Naive thymus-derived CD4-positive, alpha-beta T cell (primary cell): ENCODE measurements at regions of chr16 and their contacts with region 1.

Region 1: GRCh38 chr16:2155091-2156021 is at the start of gene TRAF7:
- DNase-seq: peak; percentile 85 to 99 (median 98)
- ATAC-seq: peak; percentile 95
- H3K4me3 ChIP-seq: peak within 1 kb of the TSS; percentile 79
- H3K4me3 Mint-ChIP-seq: peak within 1 kb of the TSS; percentile 85 to 99 (median 94)
- H3K27ac ChIP-seq: peak within 1 kb of the TSS; percentile 80
- H3K27ac Mint-ChIP-seq: peak within 1 kb of the TSS; percentile 78 to 95 (median 91)
- H3K4me1 ChIP-seq: peaks cover 21 to 52% of the 10 kb centered on the region in 2 donors
- H3K4me1 Mint-ChIP-seq: peaks cover 20 to 59% (median 44%) of the 10 kb centered on the region in 7 donors
- H3K27me3 ChIP-seq: no peaks in the 10 kb centered on the region
- H3K27me3 Mint-ChIP-seq: no peaks in the 10 kb centered on the region
- total RNA-seq, gene TRAF7: 30.0 to 58.3 (median 36.7) TPM

Region 2: DNA sequence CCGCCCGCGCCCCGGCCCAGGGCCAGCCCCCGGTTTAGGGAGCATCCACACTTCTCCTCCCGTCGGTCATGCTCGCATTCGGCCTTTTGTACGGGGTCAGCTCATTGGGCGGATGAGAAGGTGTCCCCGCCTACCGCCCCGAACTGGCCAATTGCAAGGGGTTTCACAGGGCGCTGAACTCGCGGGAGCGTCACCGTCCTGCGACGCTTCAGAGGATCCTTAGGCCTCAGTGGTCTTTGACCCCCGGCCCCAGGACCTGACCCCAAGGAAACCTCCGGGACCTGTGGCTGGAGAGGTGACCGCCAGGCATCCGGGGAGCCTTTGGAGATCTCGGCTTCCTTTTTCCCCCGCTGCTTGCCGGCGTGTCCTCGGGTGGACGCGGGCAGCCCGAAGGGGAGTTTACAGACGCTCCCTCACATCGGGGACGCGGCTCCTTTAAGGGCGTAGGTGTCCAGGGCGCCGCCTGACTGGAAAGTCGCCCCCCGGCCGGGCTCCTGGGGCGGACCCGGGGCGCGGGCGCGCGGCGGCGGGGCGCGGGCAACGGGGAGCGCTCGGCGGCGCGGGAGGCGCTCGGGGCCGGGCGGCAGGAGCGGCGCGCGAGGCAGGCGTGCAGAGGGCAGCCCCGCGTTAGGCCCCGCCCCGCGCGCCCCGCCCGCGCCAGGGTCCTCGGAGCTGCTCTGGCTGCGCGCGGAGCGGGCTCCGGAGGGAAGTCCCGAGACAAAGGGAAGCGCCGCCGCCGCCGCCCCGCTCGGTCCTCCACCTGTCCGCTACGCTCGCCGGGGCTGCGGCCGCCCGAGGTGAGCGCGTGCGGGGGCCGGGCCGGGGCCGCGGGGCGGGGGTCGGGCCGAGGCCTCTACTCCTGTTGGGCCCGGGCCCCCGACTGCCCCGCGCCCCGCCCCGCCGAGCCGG is 846.1 kb before region 1 on chr16 and contains the start of gene UBE2I:
- CTCF ChIA-PET with region 1: no interaction called
- POLR2A ChIA-PET with region 1: no interaction called
- intact Hi-C with region 1: loop called in 1 of 2 experiments (anchors 5 kb)
- DNase-seq: peak; percentile 95 to 100 (median 99)
- ATAC-seq: peak; percentile 85
- H3K4me3 ChIP-seq: peak within 1 kb of the TSS; percentile 95
- H3K4me3 Mint-ChIP-seq: peak within 1 kb of the TSS; percentile 92 to 100 (median 98)
- H3K27ac ChIP-seq: peak within 1 kb of the TSS; percentile 99
- H3K27ac Mint-ChIP-seq: peak within 1 kb of the TSS; percentile 97 to 100 (median 99)
- H3K4me1 ChIP-seq: peaks cover 27 to 33% of the 10 kb centered on the region in 2 donors
- H3K4me1 Mint-ChIP-seq: peaks cover 15 to 56% (median 34%) of the 10 kb centered on the region in 7 donors
- H3K27me3 ChIP-seq: no peaks in the 10 kb centered on the region
- H3K27me3 Mint-ChIP-seq: no peaks in the 10 kb centered on the region
- total RNA-seq, gene UBE2I: 159 to 277 (median 203) TPM

Region 3: DNA sequence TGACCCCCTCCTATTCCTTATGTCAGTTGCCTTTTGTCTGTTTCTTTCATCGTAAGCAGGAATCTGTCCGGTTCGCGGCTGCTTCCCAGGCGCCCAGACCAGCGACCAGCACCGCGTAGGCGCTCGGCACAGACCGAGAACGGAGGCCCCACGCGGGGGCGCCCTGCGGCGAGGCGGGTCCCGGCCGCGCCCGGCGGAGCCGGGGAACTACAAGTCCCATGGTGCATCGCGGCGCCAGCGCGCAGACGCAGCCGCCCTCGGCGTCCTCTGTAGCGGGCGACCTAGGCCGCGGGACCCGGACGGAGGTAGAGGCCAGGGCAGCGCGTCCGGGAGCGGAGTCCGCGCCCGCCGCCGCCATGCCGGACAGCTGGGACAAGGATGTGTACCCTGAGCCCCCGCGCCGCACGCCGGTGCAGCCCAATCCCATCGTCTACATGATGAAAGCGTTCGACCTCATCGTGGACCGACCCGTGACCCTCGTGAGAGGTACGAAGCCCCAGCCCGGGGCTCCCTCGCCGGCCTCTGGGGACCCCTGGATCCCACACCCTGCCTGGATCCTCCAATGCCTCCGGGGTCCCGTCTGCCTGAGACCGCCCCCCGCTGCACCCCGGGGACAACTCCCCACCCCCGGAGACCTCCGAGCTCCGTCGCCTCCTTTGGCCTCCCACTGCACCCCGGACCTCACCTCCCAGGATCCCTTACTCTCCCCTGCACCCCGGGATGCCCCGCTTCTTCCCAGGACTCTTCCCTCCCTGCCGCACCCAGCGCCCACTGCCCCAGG is 195.9 kb before region 1 on chr16 and contains the start of gene NDUFB10:
- CTCF ChIA-PET with region 1: no interaction called
- POLR2A ChIA-PET with region 1: interaction called, 44 read pairs
- intact Hi-C with region 1: loop called (anchors 1 kb)
- DNase-seq: peak; percentile 80 to 98 (median 89)
- ATAC-seq: peak; percentile 97
- H3K4me3 ChIP-seq: peak within 1 kb of the TSS; percentile 86
- H3K4me3 Mint-ChIP-seq: peak within 1 kb of the TSS; percentile 85 to 97 (median 91)
- H3K27ac ChIP-seq: peak within 1 kb of the TSS; percentile 92
- H3K27ac Mint-ChIP-seq: peak within 1 kb of the TSS; percentile 82 to 95 (median 90)
- H3K4me1 ChIP-seq: peaks cover 25 to 38% of the 10 kb centered on the region in 2 donors
- H3K4me1 Mint-ChIP-seq: peaks cover 21 to 41% (median 27%) of the 10 kb centered on the region in 7 donors
- H3K27me3 ChIP-seq: no peaks in the 10 kb centered on the region
- H3K27me3 Mint-ChIP-seq: peaks cover 0 to 2% (median 0%) of the 10 kb centered on the region in 5 donors
- total RNA-seq, gene NDUFB10: 40.0 to 114 (median 71.1) TPM

Region 4: GRCh38 chr16:1991948-1992703 is 163.2 kb before region 1 on chr16:
- CTCF ChIA-PET with region 1: interaction called, 3 read pairs
- POLR2A ChIA-PET with region 1: interaction called, 13 read pairs
- intact Hi-C with region 1: no loop called
- DNase-seq: peak; percentile 85 to 98 (median 92)
- ATAC-seq: peak; percentile 95
- H3K4me3 ChIP-seq: peak overlapping the region; percentile 39
- H3K4me3 Mint-ChIP-seq: peak overlapping the region in 9 of 10 donors; percentile 45 to 82 (median 75)
- H3K27ac ChIP-seq: peak overlapping the region; percentile 54
- H3K27ac Mint-ChIP-seq: peak overlapping the region in 7 of 9 donors; percentile 22 to 82 (median 62)
- H3K4me1 ChIP-seq: peaks cover 15 to 16% of the 10 kb centered on the region in 2 donors
- H3K4me1 Mint-ChIP-seq: peaks cover 5 to 33% (median 22%) of the 10 kb centered on the region in 7 donors
- H3K27me3 ChIP-seq: peaks cover 0 to 3% of the 10 kb centered on the region in 2 donors
- H3K27me3 Mint-ChIP-seq: peaks cover 8 to 14% (median 10%) of the 10 kb centered on the region in 5 donors

Region 5: GRCh38 chr16:2047330-2048115 is 107.8 kb before region 1 on chr16 and contains the starts of genes NTHL1 and TSC2:
- CTCF ChIA-PET with region 1: interaction called, 3 read pairs
- POLR2A ChIA-PET with region 1: interaction called, 25 read pairs
- intact Hi-C with region 1: loop called in 1 of 2 experiments (anchors 1 kb)
- DNase-seq: peak; percentile 81 to 95 (median 87)
- ATAC-seq: peak; percentile 98
- H3K4me3 ChIP-seq: peak within 1 kb of the TSS; percentile 72
- H3K4me3 Mint-ChIP-seq: peak within 1 kb of the TSS; percentile 82 to 97 (median 93)
- H3K27ac ChIP-seq: peak within 1 kb of the TSS; percentile 82
- H3K27ac Mint-ChIP-seq: peak within 1 kb of the TSS in 8 of 9 donors; percentile 57 to 91 (median 82)
- H3K4me1 ChIP-seq: peaks cover 6 to 12% of the 10 kb centered on the region in 2 donors
- H3K4me1 Mint-ChIP-seq: peaks cover 16 to 23% (median 19%) of the 10 kb centered on the region in 7 donors
- H3K27me3 ChIP-seq: no peaks in the 10 kb centered on the region
- H3K27me3 Mint-ChIP-seq: no peaks in the 10 kb centered on the region
- total RNA-seq, gene NTHL1: 4.4 to 27.0 (median 7.5) TPM
- total RNA-seq, gene TSC2: 126 to 155 (median 147) TPM

Region 6: DNA sequence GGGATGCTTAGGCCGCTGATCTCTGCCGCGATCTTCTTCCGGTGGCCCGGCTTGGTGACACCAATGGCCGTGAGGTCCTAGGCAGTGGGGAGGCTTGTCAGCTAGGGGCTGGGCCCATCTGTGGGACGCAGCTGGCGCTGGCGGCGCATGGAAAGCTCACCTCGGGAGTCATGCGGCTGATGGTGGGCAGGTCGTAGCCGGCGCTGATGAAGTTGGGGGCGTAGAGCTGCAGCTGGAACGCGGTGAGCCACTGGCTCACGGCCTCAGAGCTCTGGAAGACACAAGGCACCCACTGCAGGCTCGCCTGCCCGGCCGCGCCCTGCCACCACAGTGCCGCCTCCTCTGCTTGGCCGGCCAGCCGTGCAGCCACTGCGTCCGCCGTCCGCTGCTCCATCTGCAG is 28.3 kb after region 1 on chr16:
- CTCF ChIA-PET with region 1: no interaction called
- POLR2A ChIA-PET with region 1: no interaction called
- intact Hi-C with region 1: no loop called
- DNase-seq: no peak
- ATAC-seq: no peak
- H3K4me3 ChIP-seq: no peak overlapping the region
- H3K4me3 Mint-ChIP-seq: no peak overlapping the region
- H3K27ac ChIP-seq: no peak overlapping the region
- H3K27ac Mint-ChIP-seq: no peak overlapping the region
- H3K4me1 ChIP-seq: no peaks in the 10 kb centered on the region
- H3K4me1 Mint-ChIP-seq: peaks cover 0 to 2% (median 0%) of the 10 kb centered on the region in 7 donors
- H3K27me3 ChIP-seq: no peaks in the 10 kb centered on the region
- H3K27me3 Mint-ChIP-seq: no peaks in the 10 kb centered on the region

Region 7: GRCh38 chr16:2251483-2252240 is 96.3 kb after region 1 on chr16 and contains the start of gene ECI1:
- CTCF ChIA-PET with region 1: interaction called, 3 read pairs
- POLR2A ChIA-PET with region 1: interaction called, 9 read pairs
- intact Hi-C with region 1: loop called in 1 of 2 experiments (anchors 5 kb)
- DNase-seq: peak; percentile 48 to 90 (median 62)
- ATAC-seq: peak; percentile 91
- H3K4me3 ChIP-seq: peak within 1 kb of the TSS; percentile 62
- H3K4me3 Mint-ChIP-seq: peak within 1 kb of the TSS; percentile 85 to 94 (median 89)
- H3K27ac ChIP-seq: peak within 1 kb of the TSS; percentile 76
- H3K27ac Mint-ChIP-seq: peak within 1 kb of the TSS; percentile 85 to 94 (median 91)
- H3K4me1 ChIP-seq: peaks cover 7% of the 10 kb centered on the region in 2 donors
- H3K4me1 Mint-ChIP-seq: peaks cover 0 to 12% (median 7%) of the 10 kb centered on the region in 7 donors
- H3K27me3 ChIP-seq: no peaks in the 10 kb centered on the region
- H3K27me3 Mint-ChIP-seq: no peaks in the 10 kb centered on the region
- total RNA-seq, gene ECI1: 19.9 to 29.3 (median 26.8) TPM

Region 8: GRCh38 chr16:2288726-2289125 is 133.4 kb after region 1 on chr16:
- CTCF ChIA-PET with region 1: no interaction called
- POLR2A ChIA-PET with region 1: no interaction called
- intact Hi-C with region 1: no loop called
- DNase-seq: no peak
- ATAC-seq: no peak
- H3K4me3 ChIP-seq: no peak overlapping the region
- H3K4me3 Mint-ChIP-seq: no peak overlapping the region
- H3K27ac ChIP-seq: no peak overlapping the region
- H3K27ac Mint-ChIP-seq: no peak overlapping the region
- H3K4me1 ChIP-seq: no peaks in the 10 kb centered on the region
- H3K4me1 Mint-ChIP-seq: peaks cover 0 to under 1% (median 0%) of the 10 kb centered on the region in 7 donors
- H3K27me3 ChIP-seq: no peaks in the 10 kb centered on the region
- H3K27me3 Mint-ChIP-seq: no peaks in the 10 kb centered on the region

Region 9: DNA sequence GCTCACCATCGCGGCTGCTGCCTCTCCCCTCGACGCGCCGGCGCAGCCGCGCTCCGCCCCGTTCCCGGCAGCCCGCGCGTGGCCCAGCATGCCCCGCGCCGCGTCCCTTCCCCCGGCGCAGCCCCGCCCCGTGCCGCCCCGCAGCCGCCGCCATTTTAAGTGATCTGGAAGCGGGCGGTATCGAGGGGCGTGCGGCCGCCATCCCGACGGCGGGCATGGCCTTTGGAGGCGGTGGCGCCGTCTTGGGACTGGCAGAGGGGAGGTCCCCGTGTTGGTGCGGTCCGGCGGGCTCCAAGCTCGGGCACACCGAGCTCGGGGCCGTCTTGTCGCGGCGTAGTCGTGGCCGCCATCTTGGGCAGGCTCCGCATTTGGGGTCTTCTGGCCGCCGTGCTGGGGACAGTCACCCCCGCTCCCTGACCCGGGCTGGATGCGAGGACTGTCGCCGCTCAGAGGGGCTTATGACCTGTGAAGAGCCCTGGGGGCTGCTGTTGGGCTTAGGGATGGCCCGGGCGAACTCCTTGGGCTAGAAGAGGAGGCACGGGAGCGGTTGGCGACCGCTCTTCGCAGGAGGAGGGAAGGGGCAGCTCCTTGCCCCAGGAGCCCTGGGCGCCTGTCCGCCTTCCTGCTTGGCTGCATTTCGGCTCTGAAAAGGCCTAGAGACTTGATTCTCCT is 622.0 kb after region 1 on chr16 and contains the start of gene ELOB:
- CTCF ChIA-PET with region 1: no interaction called
- POLR2A ChIA-PET with region 1: interaction called, 3 read pairs
- intact Hi-C with region 1: loop called in 1 of 2 experiments (anchors 5 kb)
- DNase-seq: peak; percentile 81 to 95 (median 90)
- ATAC-seq: peak; percentile 95
- H3K4me3 ChIP-seq: peak within 1 kb of the TSS; percentile 93
- H3K4me3 Mint-ChIP-seq: peak within 1 kb of the TSS; percentile 93 to 97 (median 96)
- H3K27ac ChIP-seq: peak within 1 kb of the TSS; percentile 99
- H3K27ac Mint-ChIP-seq: peak within 1 kb of the TSS; percentile 96 to 99 (median 98)
- H3K4me1 ChIP-seq: peaks cover 19 to 24% of the 10 kb centered on the region in 2 donors
- H3K4me1 Mint-ChIP-seq: peaks cover 20 to 55% (median 38%) of the 10 kb centered on the region in 7 donors
- H3K27me3 ChIP-seq: no peaks in the 10 kb centered on the region
- H3K27me3 Mint-ChIP-seq: no peaks in the 10 kb centered on the region
- total RNA-seq, gene ELOB: 65.3 to 242 (median 99.3) TPM